Aorta (tissue), 5 donors: ENCODE measurements at regions of chr11 and their contacts with region 1.

Region 1: DNA sequence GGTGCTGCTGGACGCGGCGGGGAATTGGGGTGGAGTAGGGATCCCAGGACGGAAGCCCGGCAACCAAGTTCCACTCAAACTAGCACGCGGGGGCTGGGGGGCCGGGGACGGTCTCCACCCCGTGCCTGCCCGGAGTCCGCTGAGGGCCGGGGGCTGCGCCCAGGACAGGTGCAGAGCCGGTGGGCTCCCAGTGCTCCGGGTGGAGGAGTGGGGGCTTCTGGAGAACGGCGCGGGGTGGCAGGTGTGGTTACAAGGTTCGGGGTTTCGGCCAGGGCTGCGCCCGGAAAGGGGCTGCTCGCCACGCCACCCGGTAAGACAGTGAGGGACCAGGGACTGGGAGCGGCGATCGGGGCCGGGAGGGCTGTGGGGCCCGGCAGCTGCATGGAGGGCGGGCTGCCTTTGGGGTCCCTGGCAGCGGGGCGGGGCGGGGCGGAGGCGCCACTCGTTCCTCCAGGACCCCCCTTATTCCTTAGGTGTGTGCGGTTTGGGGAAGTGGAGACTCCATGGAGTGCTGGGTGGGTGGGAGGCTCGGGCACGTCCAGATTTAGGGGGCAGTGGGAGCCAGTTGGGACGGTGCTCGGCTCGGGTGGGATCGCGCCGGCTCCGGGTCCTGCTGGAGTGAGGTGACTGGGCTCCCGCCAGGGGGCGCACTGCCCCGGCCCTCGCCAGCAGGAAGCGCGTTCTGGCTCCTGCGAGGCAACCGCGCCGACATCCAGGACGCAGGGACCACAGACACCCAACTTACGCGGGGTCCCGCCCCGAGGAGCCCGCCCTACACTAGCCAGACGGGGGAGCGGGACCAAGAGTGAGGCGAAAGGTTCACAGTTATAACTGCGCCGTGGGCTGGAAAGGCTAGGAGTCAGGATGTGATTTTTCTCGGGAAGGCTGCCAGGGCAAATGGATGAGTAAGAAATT is 868 bp downstream of the TSPAN18 start:
- DNase-seq: peak; percentile 87 to 94
- ATAC-seq: peak; percentile 93
- H3K4me3 ChIP-seq: peak overlapping the region; percentile 42 to 43
- H3K27ac ChIP-seq: no peak overlapping the region
- H3K4me1 ChIP-seq: no peaks in the 10 kb centered on the region
- H3K27me3 ChIP-seq: no peaks in the 10 kb centered on the region

Region 2: DNA sequence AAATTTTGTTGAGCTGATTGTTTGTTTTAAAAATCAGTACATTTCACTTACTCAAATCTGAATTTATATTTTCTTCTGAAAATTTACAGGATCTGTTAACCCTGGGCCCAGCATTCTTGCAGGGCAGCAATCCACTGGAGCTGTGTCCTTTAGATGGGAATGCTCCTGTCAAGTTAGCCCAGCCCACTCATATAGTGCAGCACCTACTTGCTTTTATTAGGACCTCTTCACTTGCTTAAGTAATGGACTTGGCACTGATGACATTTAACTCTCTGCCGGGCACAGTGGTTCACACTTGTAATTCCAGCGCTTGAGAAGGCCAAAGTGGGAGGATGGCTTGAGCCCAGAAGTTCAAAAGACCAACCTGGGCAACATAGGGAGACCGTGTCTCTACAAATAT is 957.5 kb before region 1 on chr11:
- intact Hi-C with region 1: no loop called
- DNase-seq: no peak
- ATAC-seq: no peak
- H3K4me3 ChIP-seq: no peak overlapping the region
- H3K27ac ChIP-seq: no peak overlapping the region
- H3K4me1 ChIP-seq: no peaks in the 10 kb centered on the region
- H3K27me3 ChIP-seq: no peaks in the 10 kb centered on the region

Region 3: DNA sequence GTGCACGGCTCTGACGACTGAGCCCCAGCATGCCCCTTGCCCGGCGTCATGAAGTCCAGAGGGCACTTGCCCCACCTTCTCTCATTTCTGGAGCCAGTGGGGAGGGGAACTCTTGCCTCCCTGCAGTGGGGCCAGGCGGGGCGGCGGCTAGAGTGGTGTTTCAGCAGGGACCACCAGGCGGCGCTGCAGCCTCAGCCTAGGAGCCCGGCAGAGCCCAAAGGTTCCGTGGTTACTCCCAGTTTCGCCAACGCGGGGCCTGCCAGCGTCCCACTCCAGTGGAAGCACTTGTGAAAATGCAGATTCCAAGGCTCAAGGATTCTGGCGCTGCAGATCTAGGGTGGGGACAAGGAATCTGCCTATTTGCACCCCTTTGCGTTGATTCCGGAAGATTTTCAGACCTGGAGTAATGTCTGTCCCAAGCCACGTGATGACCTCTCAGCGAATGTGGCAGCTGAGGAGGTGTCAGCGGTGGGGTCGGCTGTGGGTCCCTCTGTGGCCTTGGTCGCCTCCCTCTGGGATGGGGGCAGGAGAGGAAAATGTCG is 106.4 kb before region 1 on chr11:
- intact Hi-C with region 1: loop called (anchors 5 kb)
- DNase-seq: peak; percentile 81 to 95
- ATAC-seq: peak; percentile 89
- H3K4me3 ChIP-seq: no peak overlapping the region
- H3K27ac ChIP-seq: no peak overlapping the region
- H3K4me1 ChIP-seq: no peaks in the 10 kb centered on the region
- H3K27me3 ChIP-seq: no peaks in the 10 kb centered on the region

Region 4: DNA sequence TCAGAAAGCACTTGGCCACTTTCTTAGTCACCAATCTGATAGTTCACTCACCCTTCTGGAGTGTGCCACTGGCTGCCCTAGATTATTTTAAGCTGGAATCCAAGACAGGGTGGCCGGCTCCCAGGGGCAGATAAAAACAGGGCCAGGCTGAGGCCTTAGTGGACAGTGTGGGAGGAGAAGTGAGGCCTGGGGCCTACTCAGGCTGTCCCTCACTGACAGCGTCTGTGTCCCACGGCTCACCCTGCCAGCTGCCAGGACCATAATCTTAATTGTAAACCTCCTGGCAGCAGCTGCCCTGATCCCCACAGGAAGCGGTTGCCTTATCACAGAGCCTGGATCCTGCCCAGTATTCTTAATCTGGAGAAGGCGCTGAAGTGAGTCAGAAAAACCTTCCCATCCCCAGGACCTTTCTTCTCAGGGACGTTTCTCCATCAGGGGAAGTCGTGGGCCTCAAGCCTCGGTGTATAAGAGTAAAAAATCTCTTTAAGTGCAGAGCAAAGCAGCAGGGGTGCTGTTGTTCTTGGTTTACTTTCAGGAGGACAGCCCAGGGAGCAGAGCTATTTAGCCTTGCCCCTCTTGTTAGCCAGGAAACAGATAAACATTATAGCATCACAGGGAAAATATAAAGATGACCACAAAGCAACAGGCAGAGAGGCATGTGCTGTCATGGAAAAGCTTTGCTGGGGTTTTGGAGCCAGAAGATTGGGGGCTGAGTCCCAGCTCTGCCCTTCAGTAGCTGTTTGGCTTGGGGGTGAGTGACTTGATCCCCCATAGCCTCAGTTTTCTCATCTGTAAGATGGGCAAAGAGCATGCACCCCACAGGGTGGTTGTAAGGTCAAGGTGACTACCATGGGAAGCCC is 38.7 kb after region 1 on chr11:
- intact Hi-C with region 1: loop called in 1 of 2 experiments (anchors 5 kb)
- DNase-seq: peak; percentile 84 to 87
- ATAC-seq: peak; percentile 84
- H3K4me3 ChIP-seq: no peak overlapping the region
- H3K27ac ChIP-seq: peak overlapping the region; percentile 69 to 95
- H3K4me1 ChIP-seq: peaks cover 0 to 3% of the 10 kb centered on the region in 2 donors
- H3K27me3 ChIP-seq: no peaks in the 10 kb centered on the region

Region 5: GRCh38 chr11:44775366-44775984 is 47.8 kb after region 1 on chr11:
- intact Hi-C with region 1: loop called in 1 of 2 experiments (anchors 2 kb)
- DNase-seq: peak in 1 of 2 donors; percentile 83
- ATAC-seq: no peak
- H3K4me3 ChIP-seq: no peak overlapping the region
- H3K27ac ChIP-seq: no peak overlapping the region
- H3K4me1 ChIP-seq: no peaks in the 10 kb centered on the region
- H3K27me3 ChIP-seq: no peaks in the 10 kb centered on the region

Region 6: GRCh38 chr11:44893846-44894617 is 166.4 kb after region 1 on chr11:
- intact Hi-C with region 1: loop called (anchors 1 to 2 kb)
- DNase-seq: peak; percentile 75 to 93
- ATAC-seq: peak; percentile 87
- H3K4me3 ChIP-seq: no peak overlapping the region
- H3K27ac ChIP-seq: no peak overlapping the region
- H3K4me1 ChIP-seq: no peaks in the 10 kb centered on the region
- H3K27me3 ChIP-seq: peaks cover 0 to 2% of the 10 kb centered on the region in 2 donors

Region 7: GRCh38 chr11:44911029-44911814 is 183.6 kb after region 1 on chr11:
- intact Hi-C with region 1: loop called in 1 of 2 experiments (anchors 5 kb)
- DNase-seq: peak; percentile 90 to 93
- ATAC-seq: peak; percentile 89
- H3K4me3 ChIP-seq: no peak overlapping the region
- H3K27ac ChIP-seq: no peak overlapping the region
- H3K4me1 ChIP-seq: no peaks in the 10 kb centered on the region
- H3K27me3 ChIP-seq: no peaks in the 10 kb centered on the region